Activated T-helper 1 cell treated with anti-CD3 and anti-CD28 coated beads, Interleukin-12 subunit alpha, Interleukin-12 subunit beta, Interleukin-2, Interleukin-4 antibody, amounts not matched to agents 30 ng/mL and 10 ng/mL and 1 ng/mL, durations not matched to agents 14 hours and 24 hours and 36 hours (primary cell): ENCODE measurements at regions of chr6 and their contacts with region 1.

Region 1: GRCh38 chr6:27672113-27672799 is 199.4 kb upstream of the ZNF184 start:
- DNase-seq: peak; percentile 29
- H3K4me3 Mint-ChIP-seq: peak overlapping the region; percentile 28
- H3K27ac Mint-ChIP-seq: peak overlapping the region; percentile 29
- H3K4me1 Mint-ChIP-seq: peaks cover 53% of the 10 kb centered on the region
- H3K27me3 Mint-ChIP-seq: peaks cover 73% of the 10 kb centered on the region

Region 2: DNA sequence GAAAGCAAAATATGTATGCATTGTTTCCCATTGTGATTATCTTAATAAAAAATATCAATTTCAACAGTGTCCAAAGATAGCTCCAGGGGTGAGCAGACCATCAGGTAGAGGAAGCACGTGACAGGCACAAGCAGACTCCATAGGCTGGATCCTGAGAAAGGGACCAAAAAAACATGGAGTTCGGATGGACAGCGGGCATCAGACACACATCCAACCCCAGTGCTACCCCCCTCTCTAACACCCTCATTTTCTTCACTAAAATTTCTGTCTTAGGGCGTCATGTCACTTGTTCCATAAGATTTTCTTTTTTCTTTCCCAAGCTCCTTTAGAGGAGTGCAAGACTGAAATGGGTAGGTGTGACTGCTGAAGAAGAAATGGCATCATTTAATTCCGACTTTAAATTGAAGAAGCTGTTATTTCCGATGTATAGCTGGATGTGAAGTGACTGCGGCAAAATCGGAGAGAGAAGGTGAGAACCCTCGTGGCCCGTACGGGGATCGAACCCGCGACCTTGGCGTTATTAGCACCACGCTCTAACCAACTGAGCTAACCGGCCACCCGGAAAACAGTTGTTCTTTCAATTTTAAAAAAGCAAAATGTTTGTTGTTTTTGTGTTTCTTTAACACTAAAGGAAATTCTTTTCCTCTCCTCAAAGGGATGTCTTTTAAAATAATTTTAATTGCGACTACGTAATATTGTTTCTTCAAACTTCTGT is 435.0 kb before region 1 on chr6:
- intact Hi-C with region 1: loop called (anchors 5 kb)
- DNase-seq: no peak
- H3K4me3 Mint-ChIP-seq: peak overlapping the region; percentile 71
- H3K27ac Mint-ChIP-seq: peak overlapping the region; percentile 25
- H3K4me1 Mint-ChIP-seq: peaks cover 23% of the 10 kb centered on the region
- H3K27me3 Mint-ChIP-seq: peaks cover 46% of the 10 kb centered on the region

Region 3: GRCh38 chr6:27295301-27296081 is 376.8 kb before region 1 on chr6:
- intact Hi-C with region 1: loop called (anchors 5 kb)
- DNase-seq: no peak
- H3K4me3 Mint-ChIP-seq: no peak overlapping the region
- H3K27ac Mint-ChIP-seq: peak overlapping the region; percentile 32
- H3K4me1 Mint-ChIP-seq: no peaks in the 10 kb centered on the region
- H3K27me3 Mint-ChIP-seq: peaks cover 54% of the 10 kb centered on the region

Region 4: DNA sequence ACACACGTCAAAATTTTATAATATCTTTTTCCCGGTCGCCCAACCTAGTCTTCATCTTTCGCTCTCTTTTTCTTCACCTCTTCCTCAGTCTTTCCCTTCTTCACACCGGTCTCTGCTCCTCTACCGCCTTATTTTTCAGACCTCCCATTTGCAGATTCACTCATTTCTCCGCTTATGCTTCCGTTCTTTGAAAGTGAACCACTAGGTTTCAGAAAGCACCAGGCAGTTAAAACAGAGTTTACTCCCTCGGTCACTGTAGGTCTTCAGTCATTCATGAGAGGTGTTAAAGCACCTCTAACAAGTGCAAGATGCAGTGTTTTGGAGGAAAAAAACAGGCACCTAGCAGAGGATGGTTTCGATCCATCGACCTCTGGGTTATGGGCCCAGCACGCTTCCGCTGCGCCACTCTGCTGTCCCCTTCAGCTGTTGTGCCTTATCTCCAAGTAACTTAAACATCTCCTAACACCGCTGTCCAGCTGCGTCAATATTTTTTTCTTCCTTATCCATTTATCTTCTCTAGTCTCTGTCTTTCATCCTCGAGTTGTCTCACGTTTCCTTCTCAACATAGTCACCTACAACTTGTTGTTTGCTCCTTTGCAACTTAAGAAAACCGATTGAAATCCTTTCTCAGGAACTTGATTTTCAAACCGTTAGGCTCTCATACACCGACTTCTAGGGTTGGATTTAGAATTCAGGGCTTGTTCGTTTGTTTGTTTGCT is 79.6 kb before region 1 on chr6:
- intact Hi-C with region 1: loop called (anchors 2 kb)
- DNase-seq: peak; percentile 51
- H3K4me3 Mint-ChIP-seq: no peak overlapping the region
- H3K27ac Mint-ChIP-seq: no peak overlapping the region
- H3K4me1 Mint-ChIP-seq: peaks cover 6% of the 10 kb centered on the region
- H3K27me3 Mint-ChIP-seq: peaks cover 24% of the 10 kb centered on the region

Region 5: GRCh38 chr6:27644528-27644927 is 27.7 kb before region 1 on chr6:
- intact Hi-C with region 1: no loop called
- DNase-seq: no peak
- H3K4me3 Mint-ChIP-seq: no peak overlapping the region
- H3K27ac Mint-ChIP-seq: no peak overlapping the region
- H3K4me1 Mint-ChIP-seq: no peaks in the 10 kb centered on the region
- H3K27me3 Mint-ChIP-seq: peaks cover 3% of the 10 kb centered on the region

Region 6: GRCh38 chr6:27977387-27977786 is 305.1 kb after region 1 on chr6:
- intact Hi-C with region 1: no loop called
- DNase-seq: no peak
- H3K4me3 Mint-ChIP-seq: no peak overlapping the region
- H3K27ac Mint-ChIP-seq: no peak overlapping the region
- H3K4me1 Mint-ChIP-seq: no peaks in the 10 kb centered on the region
- H3K27me3 Mint-ChIP-seq: peaks cover 13% of the 10 kb centered on the region

Region 7: DNA sequence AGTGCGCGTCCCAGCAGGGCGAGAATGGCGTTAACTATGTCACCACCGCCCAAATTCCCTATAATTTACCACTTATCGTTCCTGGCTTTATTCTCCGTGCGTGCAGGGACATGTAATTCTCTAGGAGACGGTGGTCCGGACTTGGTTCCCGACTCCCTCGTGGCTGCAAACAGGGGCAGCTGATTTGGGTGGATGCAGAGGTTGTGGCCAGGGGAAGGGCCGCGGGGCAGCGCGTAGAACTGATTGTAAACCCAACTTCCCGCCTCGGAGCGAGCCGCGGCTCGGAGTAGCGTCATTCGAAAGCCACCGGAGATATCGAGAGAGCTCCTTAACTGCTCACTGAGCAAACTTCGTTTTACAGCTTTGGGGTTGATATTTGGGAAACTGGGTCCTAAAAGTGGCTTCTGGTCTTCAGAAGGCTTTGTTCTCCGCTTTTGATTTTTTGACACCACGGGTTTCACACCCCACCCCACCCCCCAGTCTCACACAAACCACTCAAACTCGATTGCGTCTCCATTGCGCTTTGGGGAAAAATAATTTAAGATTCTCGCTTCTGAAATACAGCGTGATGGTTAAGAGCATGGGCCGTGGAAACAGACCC is 535.4 kb after region 1 on chr6:
- intact Hi-C with region 1: loop called (anchors 10 kb)
- DNase-seq: no peak
- H3K4me3 Mint-ChIP-seq: peak overlapping the region; percentile 86
- H3K27ac Mint-ChIP-seq: no peak overlapping the region
- H3K4me1 Mint-ChIP-seq: peaks cover 31% of the 10 kb centered on the region
- H3K27me3 Mint-ChIP-seq: peaks cover 75% of the 10 kb centered on the region

Region 8: GRCh38 chr6:28809947-28810658 is 1137.8 kb after region 1 on chr6:
- intact Hi-C with region 1: loop called (anchors 5 kb)
- DNase-seq: no peak
- H3K4me3 Mint-ChIP-seq: peak overlapping the region; percentile 43
- H3K27ac Mint-ChIP-seq: peak overlapping the region; percentile 49
- H3K4me1 Mint-ChIP-seq: peaks cover 19% of the 10 kb centered on the region
- H3K27me3 Mint-ChIP-seq: peaks cover 95% of the 10 kb centered on the region